ENCODE measurements at regions of chr20 and their contacts with region 1.

Region 1: GRCh38 chr20:35994994-35995453 is 26.6 kb downstream of the CNBD2 start:
- DNase-seq: no peak
- H3K4me3 ChIP-seq: no peak overlapping the region
- H3K27me3 ChIP-seq: no peaks in the 10 kb centered on the region
- CTCF ChIP-seq: peak; percentile 98

Region 2: GRCh38 chr20:35978041-35978513 is 16.9 kb before region 1 on chr20:
- CTCF ChIA-PET with region 1: interaction called, 131 read pairs
- POLR2A ChIA-PET with region 1: no interaction called
- DNase-seq: no peak
- H3K4me3 ChIP-seq: no peak overlapping the region
- H3K27me3 ChIP-seq: peaks cover 7% of the 10 kb centered on the region
- CTCF ChIP-seq: no peak

Region 3: GRCh38 chr20:36017034-36017951 is 22.3 kb after region 1 on chr20:
- CTCF ChIA-PET with region 1: interaction called, 12 read pairs
- POLR2A ChIA-PET with region 1: no interaction called
- DNase-seq: peak; percentile 77
- H3K4me3 ChIP-seq: no peak overlapping the region
- H3K27me3 ChIP-seq: no peaks in the 10 kb centered on the region
- CTCF ChIP-seq: no peak

Region 4: DNA sequence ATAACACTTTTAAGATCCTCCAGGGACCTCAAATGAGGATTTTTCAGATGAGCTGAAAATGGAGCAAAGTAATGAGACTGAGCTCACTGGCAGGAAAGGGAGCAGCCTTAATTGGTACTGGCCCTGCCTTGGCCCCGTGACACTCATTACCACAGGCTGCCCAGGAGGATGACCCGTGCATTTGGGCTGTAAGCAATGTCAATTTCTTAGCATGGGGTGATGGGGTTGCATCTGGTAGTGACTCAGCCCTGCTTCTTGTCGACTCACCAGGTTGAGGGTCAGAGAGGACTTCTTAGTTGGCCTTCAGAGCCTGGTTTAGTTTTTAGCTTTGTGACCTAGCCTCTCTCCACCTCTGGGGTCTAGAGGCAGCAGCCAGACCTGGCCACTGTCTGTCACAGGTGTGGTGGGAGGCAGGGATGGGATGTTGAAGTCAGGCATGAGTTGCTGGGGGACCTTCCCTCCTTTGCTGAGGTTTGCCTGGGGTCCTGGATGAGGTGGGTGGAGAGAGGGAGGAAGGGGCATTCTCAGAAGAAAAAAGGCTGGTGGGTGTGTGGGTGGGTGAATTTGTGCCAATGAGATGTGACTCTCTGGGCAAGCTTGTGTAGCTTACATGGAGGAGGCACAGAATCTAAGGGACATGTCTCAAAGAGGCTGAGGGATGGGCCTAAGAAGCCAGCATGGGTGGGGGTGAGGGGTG is 133.6 kb after region 1 on chr20:
- CTCF ChIA-PET with region 1: interaction called, 77 read pairs
- POLR2A ChIA-PET with region 1: no interaction called
- DNase-seq: peak; percentile 44
- H3K4me3 ChIP-seq: no peak overlapping the region
- H3K27me3 ChIP-seq: no peaks in the 10 kb centered on the region
- CTCF ChIP-seq: no peak

Region 5: DNA sequence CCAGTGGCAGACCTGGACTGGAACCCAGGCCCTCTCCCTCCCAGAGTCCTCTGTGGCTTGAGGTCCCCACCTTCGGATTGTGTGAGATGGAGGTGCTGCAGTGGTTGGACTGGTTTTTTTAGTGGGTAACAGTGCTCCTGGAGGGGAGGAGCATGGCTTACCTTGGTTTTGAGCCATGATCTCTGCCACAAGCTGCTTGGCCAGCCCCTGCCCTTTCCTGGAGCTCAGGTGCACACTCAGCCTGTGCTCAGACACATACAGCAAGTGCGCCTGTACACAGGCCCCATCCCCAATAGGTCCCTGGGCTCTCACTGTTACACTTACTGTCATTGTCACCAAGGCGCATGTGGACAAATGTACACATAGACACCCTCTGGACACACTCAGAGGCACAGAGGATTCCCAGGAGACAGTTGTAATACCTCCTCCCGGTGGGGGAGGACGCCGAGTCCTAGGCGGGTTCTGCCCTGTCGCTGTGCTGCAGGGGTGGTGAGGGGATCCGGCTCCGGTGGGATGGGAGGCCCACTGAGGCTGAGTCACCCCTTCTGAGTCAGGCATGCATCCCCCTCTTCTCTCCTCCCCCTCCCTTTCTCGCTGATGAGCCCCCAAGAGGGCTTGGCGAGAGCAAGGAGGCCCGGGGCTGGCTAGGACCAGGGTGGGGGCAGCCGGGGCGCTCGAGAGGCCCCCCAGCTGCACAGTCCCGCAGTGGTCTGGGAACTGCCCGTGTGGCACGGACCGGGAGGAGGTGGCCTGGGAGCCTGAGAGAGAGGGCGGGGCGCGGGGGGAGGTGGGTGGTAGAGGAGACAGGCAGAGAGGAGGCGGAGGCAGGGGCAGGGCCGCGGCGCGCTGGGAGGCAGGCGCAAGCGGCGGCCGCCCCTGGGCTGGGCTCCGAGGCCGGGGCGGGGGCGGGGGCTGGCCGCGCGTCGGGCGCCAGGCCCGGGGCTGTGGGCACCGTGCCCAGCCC is 159.0 kb after region 1 on chr20:
- CTCF ChIA-PET with region 1: interaction called, 498 read pairs
- POLR2A ChIA-PET with region 1: no interaction called
- DNase-seq: no peak
- H3K4me3 ChIP-seq: peak overlapping the region; percentile 68
- H3K27me3 ChIP-seq: no peaks in the 10 kb centered on the region
- CTCF ChIP-seq: no peak

Measured in BJ (cell line).